Posterior vena cava (tissue), 2 donors: ENCODE measurements at regions of chr17 and their contacts with region 1.

Region 1: GRCh38 chr17:29369831-29370735 is 20.1 kb upstream of the TAOK1 start:
- DNase-seq: peak; percentile 72

Region 2: GRCh38 chr17:29032013-29032856 is 337.8 kb before region 1 on chr17:
- intact Hi-C with region 1: no loop called
- DNase-seq: peak; percentile 3

Region 3: DNA sequence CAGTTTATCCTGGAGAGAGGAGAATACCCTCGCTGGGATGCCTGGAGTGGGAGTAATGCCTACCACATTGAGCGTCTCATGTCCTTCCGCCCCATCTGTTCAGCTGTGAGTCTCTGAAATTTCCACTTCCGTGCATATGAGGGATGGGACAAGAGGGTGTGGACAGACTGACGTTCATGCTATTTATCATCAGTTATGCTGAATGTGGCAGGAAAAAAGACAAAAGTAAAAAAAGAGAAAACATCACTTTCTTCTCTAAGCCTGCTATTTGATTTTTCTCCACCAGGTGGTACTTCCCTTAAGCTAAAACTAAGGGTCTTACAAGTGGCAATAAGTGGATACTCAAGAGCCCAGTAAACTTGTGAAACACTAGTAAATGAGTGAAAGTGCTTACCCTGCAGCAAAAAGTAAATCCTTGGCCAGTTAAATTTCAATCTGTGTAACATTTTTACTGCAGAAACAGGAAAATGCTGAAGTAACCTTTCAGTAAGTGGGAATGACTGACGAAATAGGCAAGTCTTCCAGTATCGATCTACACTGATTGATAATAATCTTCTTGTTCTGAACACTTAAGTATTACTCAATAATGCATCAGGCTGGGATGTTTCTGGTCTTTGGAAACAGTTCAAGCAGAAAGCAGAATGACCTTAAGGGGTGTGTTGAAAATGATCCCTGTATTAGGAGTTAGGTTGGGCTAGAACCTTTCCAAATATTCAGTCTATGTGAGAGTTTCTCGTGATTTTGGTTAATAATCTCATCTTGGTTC is 117.8 kb before region 1 on chr17:
- intact Hi-C with region 1: no loop called
- DNase-seq: no peak

Region 4: GRCh38 chr17:29331708-29332085 is 38.4 kb before region 1 on chr17:
- intact Hi-C with region 1: no loop called
- DNase-seq: no peak

Region 5: GRCh38 chr17:29475891-29476290 is 105.8 kb after region 1 on chr17:
- intact Hi-C with region 1: loop called in 1 of 2 experiments (anchors 10 kb)
- DNase-seq: no peak

Region 6: GRCh38 chr17:29533976-29534375 is 163.9 kb after region 1 on chr17:
- intact Hi-C with region 1: loop called (anchors 5 kb)
- DNase-seq: no peak